ENCODE measurements at regions of chr11 and their contacts with region 1.

Region 1: DNA sequence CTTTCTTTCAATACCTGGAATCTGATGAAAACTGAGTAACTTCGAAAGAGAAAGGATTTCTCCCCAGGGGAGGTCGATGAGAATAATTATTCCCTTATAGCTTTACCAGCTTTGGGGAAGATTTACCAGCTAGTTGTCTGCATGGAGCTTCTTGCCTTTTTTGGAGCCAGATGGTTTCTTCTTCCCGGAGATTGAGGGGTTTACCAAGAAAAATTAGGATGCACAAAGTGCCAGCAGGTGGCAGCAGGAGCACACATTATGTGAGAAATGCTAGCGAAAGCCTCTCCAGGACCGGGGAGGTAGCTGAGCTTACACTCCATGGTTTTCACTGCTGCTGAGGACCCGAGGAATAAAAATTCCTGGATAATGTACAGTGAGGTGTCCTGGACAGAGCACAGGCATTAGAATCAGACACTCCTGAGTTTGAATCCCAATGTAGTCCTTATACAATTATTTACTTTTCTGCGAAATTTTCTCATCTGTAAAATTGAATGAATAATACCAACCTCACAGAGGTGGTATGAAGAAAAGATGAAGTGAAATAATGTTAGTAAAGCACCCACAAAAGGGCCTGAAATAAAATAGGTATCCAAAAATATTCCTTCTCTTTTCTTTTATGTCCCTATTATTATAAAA is 46.0 kb upstream of the PARVA start:
- DNase-seq: peak; percentile 48
- H3K4me3 Mint-ChIP-seq: no peak overlapping the region
- H3K27ac Mint-ChIP-seq: no peak overlapping the region
- H3K4me1 Mint-ChIP-seq: peaks cover 6% of the 10 kb centered on the region
- H3K27me3 Mint-ChIP-seq: peaks cover 1% of the 10 kb centered on the region

Region 2: DNA sequence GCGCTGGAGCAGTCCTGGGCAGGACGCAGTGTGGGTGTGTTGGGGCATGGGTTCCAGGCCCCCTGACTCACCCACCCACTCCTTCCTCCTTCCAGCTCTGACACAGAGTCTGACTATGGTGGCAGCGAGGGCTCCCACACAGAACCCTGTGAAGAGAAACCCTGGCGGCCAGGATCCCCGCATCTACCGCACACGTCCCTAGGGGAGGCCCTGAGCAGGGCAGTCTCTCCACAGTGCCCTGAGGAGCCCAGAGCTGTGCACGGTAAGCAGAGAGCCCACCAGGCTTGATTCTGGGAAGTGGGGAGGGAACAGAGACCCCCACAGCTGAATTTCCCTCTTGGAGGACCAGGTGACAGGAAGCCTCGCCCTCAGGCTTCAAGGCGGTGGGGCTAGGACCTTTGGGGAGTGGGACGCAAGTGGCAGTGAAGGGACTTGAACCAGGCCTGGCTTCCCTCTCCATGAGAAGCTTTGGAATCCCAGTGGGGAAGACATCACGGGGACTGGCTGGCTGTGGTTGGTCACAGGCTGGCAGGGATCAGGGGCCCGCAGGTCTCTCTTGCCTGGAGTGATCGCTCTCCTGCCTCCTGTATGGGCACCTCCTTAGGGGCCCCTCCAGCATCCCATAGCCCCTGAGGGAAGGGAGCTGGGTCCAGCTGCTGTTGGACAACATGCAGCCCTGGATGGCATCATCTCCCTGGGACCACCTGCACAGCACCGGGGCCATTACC is 50.4 kb before region 1 on chr11:
- intact Hi-C with region 1: no loop called
- DNase-seq: no peak
- H3K4me3 Mint-ChIP-seq: no peak overlapping the region
- H3K27ac Mint-ChIP-seq: peak overlapping the region; percentile 54
- H3K4me1 Mint-ChIP-seq: peaks cover 22% of the 10 kb centered on the region
- H3K27me3 Mint-ChIP-seq: no peaks in the 10 kb centered on the region

Region 3: GRCh38 chr11:12888525-12889158 is 557.3 kb after region 1 on chr11:
- intact Hi-C with region 1: loop called (anchors 1 kb)
- DNase-seq: peak; percentile 21
- H3K4me3 Mint-ChIP-seq: no peak overlapping the region
- H3K27ac Mint-ChIP-seq: no peak overlapping the region
- H3K4me1 Mint-ChIP-seq: no peaks in the 10 kb centered on the region
- H3K27me3 Mint-ChIP-seq: peaks cover 12% of the 10 kb centered on the region